B cell (primary cell): ENCODE measurements at regions of chr10 and their contacts with region 1.

Region 1: DNA sequence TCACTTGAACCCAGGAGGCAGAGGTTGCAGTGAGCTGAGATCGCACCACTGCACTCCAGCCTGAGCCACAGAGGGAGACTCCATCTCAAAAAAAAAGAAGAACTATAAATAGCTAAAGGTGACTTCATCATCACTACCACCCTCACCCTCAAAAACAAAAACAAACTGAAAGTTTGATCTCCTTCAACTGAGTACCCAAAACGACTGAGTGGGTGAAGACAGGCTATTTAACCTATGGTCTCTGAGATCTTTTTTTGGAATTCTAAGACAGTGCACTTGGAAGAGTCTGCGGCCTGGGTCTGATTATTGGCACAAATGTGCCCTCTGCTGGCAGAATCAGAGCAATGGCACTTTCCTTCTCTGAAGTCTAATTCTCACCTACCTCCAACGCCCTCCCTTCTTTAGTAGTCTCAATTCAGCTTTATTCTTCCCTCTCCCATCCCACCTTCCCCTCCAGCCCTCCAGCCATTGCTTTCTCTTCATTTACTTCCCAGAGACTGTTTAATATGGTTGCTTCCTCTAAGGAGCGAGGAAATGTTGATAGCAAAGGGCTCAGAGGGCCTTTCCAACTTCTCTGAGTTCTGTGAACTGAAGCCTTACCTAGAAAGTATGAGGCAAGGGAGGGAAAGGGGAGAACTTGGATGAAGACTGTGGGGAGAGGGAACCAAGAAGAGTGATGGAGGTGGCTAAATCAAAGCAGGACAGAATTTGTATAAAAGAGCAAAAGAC is 2.9 kb upstream of the MYOZ1 start:
- DNase-seq: peak; percentile 79
- ATAC-seq: peak; percentile 65
- H3K4me3 ChIP-seq: no peak overlapping the region
- H3K4me3 Mint-ChIP-seq: peak overlapping the region; percentile 75
- H3K27ac ChIP-seq: no peak overlapping the region
- H3K27ac Mint-ChIP-seq: peak overlapping the region; percentile 37
- H3K4me1 ChIP-seq: peaks cover 10 to 28% of the 10 kb centered on the region in 2 donors
- H3K4me1 Mint-ChIP-seq: peaks cover 22% of the 10 kb centered on the region
- H3K27me3 ChIP-seq: peaks cover 0 to 10% (median 0%) of the 10 kb centered on the region in 4 experiments
- H3K27me3 Mint-ChIP-seq: peaks cover 8% of the 10 kb centered on the region
- CTCF ChIP-seq: peak; percentile 89

Region 2: GRCh38 chr10:73263948-73264347 is 380.2 kb before region 1 on chr10:
- CTCF ChIA-PET with region 1: interaction called, 33 read pairs
- POLR2A ChIA-PET with region 1: no interaction called
- intact Hi-C with region 1: loop called (anchors 1 kb)
- DNase-seq: peak; percentile 17
- ATAC-seq: no peak
- H3K4me3 ChIP-seq: no peak overlapping the region
- H3K4me3 Mint-ChIP-seq: no peak overlapping the region
- H3K27ac ChIP-seq: no peak overlapping the region
- H3K27ac Mint-ChIP-seq: no peak overlapping the region
- H3K4me1 ChIP-seq: no peaks in the 10 kb centered on the region
- H3K4me1 Mint-ChIP-seq: no peaks in the 10 kb centered on the region
- H3K27me3 ChIP-seq: no peaks in the 10 kb centered on the region
- H3K27me3 Mint-ChIP-seq: no peaks in the 10 kb centered on the region
- CTCF ChIP-seq: peak; percentile 69

Region 3: GRCh38 chr10:73529089-73529832 is 114.9 kb before region 1 on chr10:
- CTCF ChIA-PET with region 1: interaction called, 191 read pairs
- POLR2A ChIA-PET with region 1: no interaction called
- intact Hi-C with region 1: no loop called
- DNase-seq: peak; percentile 79
- ATAC-seq: peak; percentile 88
- H3K4me3 ChIP-seq: no peak overlapping the region
- H3K4me3 Mint-ChIP-seq: no peak overlapping the region
- H3K27ac ChIP-seq: no peak overlapping the region
- H3K27ac Mint-ChIP-seq: no peak overlapping the region
- H3K4me1 ChIP-seq: no peaks in the 10 kb centered on the region
- H3K4me1 Mint-ChIP-seq: no peaks in the 10 kb centered on the region
- H3K27me3 ChIP-seq: no peaks in the 10 kb centered on the region
- H3K27me3 Mint-ChIP-seq: no peaks in the 10 kb centered on the region
- CTCF ChIP-seq: peak; percentile 90

Region 4: GRCh38 chr10:73534857-73535256 is 109.3 kb before region 1 on chr10:
- CTCF ChIA-PET with region 1: interaction called, 191 read pairs
- POLR2A ChIA-PET with region 1: no interaction called
- intact Hi-C with region 1: no loop called
- DNase-seq: no peak
- ATAC-seq: no peak
- H3K4me3 ChIP-seq: no peak overlapping the region
- H3K4me3 Mint-ChIP-seq: no peak overlapping the region
- H3K27ac ChIP-seq: no peak overlapping the region
- H3K27ac Mint-ChIP-seq: no peak overlapping the region
- H3K4me1 ChIP-seq: no peaks in the 10 kb centered on the region
- H3K4me1 Mint-ChIP-seq: no peaks in the 10 kb centered on the region
- H3K27me3 ChIP-seq: no peaks in the 10 kb centered on the region
- H3K27me3 Mint-ChIP-seq: no peaks in the 10 kb centered on the region
- CTCF ChIP-seq: no peak

Region 5: GRCh38 chr10:73586583-73586984 is 57.6 kb before region 1 on chr10:
- CTCF ChIA-PET with region 1: no interaction called
- POLR2A ChIA-PET with region 1: no interaction called
- intact Hi-C with region 1: no loop called
- DNase-seq: no peak
- ATAC-seq: no peak
- H3K4me3 ChIP-seq: no peak overlapping the region
- H3K4me3 Mint-ChIP-seq: no peak overlapping the region
- H3K27ac ChIP-seq: no peak overlapping the region
- H3K27ac Mint-ChIP-seq: no peak overlapping the region
- H3K4me1 ChIP-seq: peaks cover 6% of the 10 kb centered on the region in 2 donors
- H3K4me1 Mint-ChIP-seq: peaks cover 6% of the 10 kb centered on the region
- H3K27me3 ChIP-seq: no peaks in the 10 kb centered on the region
- H3K27me3 Mint-ChIP-seq: no peaks in the 10 kb centered on the region
- CTCF ChIP-seq: no peak

Region 6: GRCh38 chr10:73625884-73626752 is 18.1 kb before region 1 on chr10:
- CTCF ChIA-PET with region 1: interaction called, 16 read pairs
- POLR2A ChIA-PET with region 1: interaction called, 3 read pairs
- intact Hi-C with region 1: loop called (anchors 1 kb)
- DNase-seq: peak; percentile 96
- ATAC-seq: peak; percentile 91
- H3K4me3 ChIP-seq: peak overlapping the region; percentile 71 to 97 (median 90)
- H3K4me3 Mint-ChIP-seq: peak overlapping the region; percentile 98
- H3K27ac ChIP-seq: peak overlapping the region; percentile 70 to 92
- H3K27ac Mint-ChIP-seq: peak overlapping the region; percentile 97
- H3K4me1 ChIP-seq: peaks cover 11% of the 10 kb centered on the region in 2 donors
- H3K4me1 Mint-ChIP-seq: peaks cover 16% of the 10 kb centered on the region
- H3K27me3 ChIP-seq: no peaks in the 10 kb centered on the region
- H3K27me3 Mint-ChIP-seq: no peaks in the 10 kb centered on the region
- CTCF ChIP-seq: no peak

Region 7: GRCh38 chr10:74437822-74438221 is 793.6 kb after region 1 on chr10:
- CTCF ChIA-PET with region 1: no interaction called
- POLR2A ChIA-PET with region 1: no interaction called
- intact Hi-C with region 1: no loop called
- DNase-seq: no peak
- ATAC-seq: no peak
- H3K4me3 ChIP-seq: no peak overlapping the region
- H3K4me3 Mint-ChIP-seq: no peak overlapping the region
- H3K27ac ChIP-seq: no peak overlapping the region
- H3K27ac Mint-ChIP-seq: no peak overlapping the region
- H3K4me1 ChIP-seq: no peaks in the 10 kb centered on the region
- H3K4me1 Mint-ChIP-seq: peaks cover 3% of the 10 kb centered on the region
- H3K27me3 ChIP-seq: no peaks in the 10 kb centered on the region
- H3K27me3 Mint-ChIP-seq: no peaks in the 10 kb centered on the region
- CTCF ChIP-seq: no peak